PC-3 (cell line): ENCODE measurements at regions of chr13 and their contacts with region 1.

Region 1: GRCh38 chr13:71149498-71150363 is 717.3 kb downstream of the DACH1 start:
- DNase-seq: no peak
- ATAC-seq: no peak; the same call in 1 of the 2 replicates
- H3K4me3 ChIP-seq: no peak overlapping the region
- H3K27ac ChIP-seq: no peak overlapping the region
- H3K4me1 ChIP-seq: no peaks in the 10 kb centered on the region
- H3K27me3 ChIP-seq: no peaks in the 10 kb centered on the region
- CTCF ChIP-seq: no peak

Region 2: GRCh38 chr13:69524459-69525155 is 1625.1 kb before region 1 on chr13:
- CTCF ChIA-PET with region 1: no interaction called
- POLR2A ChIA-PET with region 1: interaction called, 29 read pairs
- intact Hi-C with region 1: no loop called
- DNase-seq: peak; percentile 23
- ATAC-seq: no peak
- H3K4me3 ChIP-seq: no peak overlapping the region
- H3K27ac ChIP-seq: no peak overlapping the region
- H3K4me1 ChIP-seq: no peaks in the 10 kb centered on the region
- H3K27me3 ChIP-seq: no peaks in the 10 kb centered on the region
- CTCF ChIP-seq: peak; percentile 49

Region 3: DNA sequence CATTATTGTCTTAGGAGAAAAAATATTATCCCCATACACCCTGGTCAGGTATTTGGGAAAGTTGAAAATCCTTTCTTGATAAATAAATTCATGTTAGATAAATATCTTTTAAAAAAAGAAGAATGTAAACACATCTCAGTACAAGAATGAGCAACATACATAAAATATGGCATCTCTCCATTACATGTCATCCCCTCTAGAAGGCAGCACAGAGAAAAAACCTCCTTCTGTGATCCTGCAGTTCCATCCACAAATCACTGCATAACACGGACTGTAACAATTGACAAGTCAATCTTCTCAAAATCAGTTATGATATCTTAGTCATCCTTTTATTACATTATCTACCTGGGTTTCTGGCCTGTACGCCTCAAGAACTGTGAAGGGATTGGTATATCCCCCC is 357.6 kb before region 1 on chr13:
- CTCF ChIA-PET with region 1: no interaction called
- POLR2A ChIA-PET with region 1: no interaction called
- intact Hi-C with region 1: no loop called
- DNase-seq: peak; percentile 8
- ATAC-seq: no peak
- H3K4me3 ChIP-seq: no peak overlapping the region
- H3K27ac ChIP-seq: no peak overlapping the region
- H3K4me1 ChIP-seq: no peaks in the 10 kb centered on the region
- H3K27me3 ChIP-seq: no peaks in the 10 kb centered on the region
- CTCF ChIP-seq: 0 out of 2 replicates have a peak, but pooled peaks have one; percentile 20